ENCODE measurements at regions of chr11 and their contacts with region 1.

Region 1: DNA sequence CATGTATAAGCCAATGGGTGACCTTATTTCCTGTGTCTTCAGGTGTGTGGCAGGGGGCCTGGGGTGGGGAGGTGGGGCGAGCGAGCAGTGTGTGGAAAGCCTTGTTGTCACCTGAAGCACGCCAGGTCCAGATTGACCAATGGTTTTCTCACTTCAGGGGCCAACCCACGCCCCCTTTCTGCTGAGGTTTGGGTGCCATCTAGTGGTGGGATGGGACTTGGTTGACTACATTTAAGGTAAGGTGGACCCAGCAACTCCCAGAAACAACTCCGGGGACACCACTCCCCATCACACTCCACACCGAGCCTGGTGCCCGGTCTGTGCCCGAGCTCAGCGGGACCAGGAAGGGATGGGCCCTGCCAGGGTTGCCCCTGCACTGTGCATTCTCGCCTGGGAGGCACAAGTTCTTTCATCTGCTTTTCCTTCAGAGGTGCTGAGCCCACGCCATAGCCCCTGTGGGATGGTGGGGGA is 40.0 kb downstream of the TPCN2 start:
- H3K4me3 Mint-ChIP-seq: no peak overlapping the region
- H3K27ac Mint-ChIP-seq: no peak overlapping the region
- H3K4me1 Mint-ChIP-seq: peaks cover 3% of the 10 kb centered on the region
- H3K27me3 Mint-ChIP-seq: no peaks in the 10 kb centered on the region

Region 2: GRCh38 chr11:68903288-68904247 is 185.1 kb before region 1 on chr11 and contains the starts of genes IGHMBP2 and MRPL21:
- intact Hi-C with region 1: loop called (anchors 10 kb)
- H3K4me3 Mint-ChIP-seq: peak within 1 kb of the TSS; percentile 90
- H3K27ac Mint-ChIP-seq: peak within 1 kb of the TSS; percentile 88
- H3K4me1 Mint-ChIP-seq: peaks cover 33% of the 10 kb centered on the region
- H3K27me3 Mint-ChIP-seq: no peaks in the 10 kb centered on the region

Measured in dendritic cell treated with granulocyte-macrophage colony-stimulating factor and Interleukin-4, amounts not matched to agents 40 ng/mL and 50 ng/mL, for 4 days (primary cell).